ENCODE measurements at regions of chr7 and their contacts with region 1.

Region 1: DNA sequence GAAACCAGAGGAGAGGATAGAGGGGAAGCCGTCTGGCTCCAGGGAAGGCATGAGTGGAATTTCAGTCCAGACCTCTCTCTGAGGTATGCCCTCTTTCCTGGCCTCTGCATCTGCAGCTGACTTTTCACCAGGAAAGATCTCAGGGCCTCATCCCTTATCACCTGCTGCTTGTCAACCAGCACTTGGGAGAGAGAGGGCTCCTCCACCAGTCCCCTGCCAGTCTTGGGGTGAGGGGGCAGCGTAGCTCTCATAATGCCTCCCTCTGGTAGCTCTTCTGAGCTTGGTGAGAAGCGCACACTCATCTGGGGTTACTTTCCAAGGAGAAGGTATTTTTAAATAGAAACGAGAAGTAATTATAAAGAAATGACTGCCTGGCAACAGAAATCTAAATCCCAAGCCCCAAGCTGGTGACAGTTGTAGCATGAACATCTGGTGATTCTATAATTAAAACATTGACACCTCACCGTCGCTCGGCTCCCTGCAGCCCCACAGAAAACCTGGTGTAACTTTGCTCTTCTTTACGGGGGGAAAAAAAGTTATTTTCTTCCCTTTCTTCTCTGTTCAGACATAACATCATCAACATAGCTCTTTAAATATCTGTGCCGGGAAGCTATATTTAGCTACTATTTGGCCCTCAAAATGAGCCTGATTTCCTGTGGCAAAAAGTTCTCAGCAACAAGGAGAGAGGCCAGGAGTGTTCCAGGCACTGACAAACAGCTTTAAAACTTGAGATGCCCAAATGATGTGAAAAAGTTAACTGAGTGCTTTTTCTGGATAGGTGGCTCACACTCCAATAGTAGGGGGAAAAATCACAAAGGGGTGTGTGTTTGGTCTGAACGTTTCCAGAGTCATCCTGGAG is 26.9 kb downstream of the HIP1 start:
- DNase-seq: peak; percentile 86
- H3K4me3 ChIP-seq: peak overlapping the region; percentile 53
- H3K27ac ChIP-seq: peak overlapping the region; percentile 98
- H3K4me1 ChIP-seq: peaks cover 41% of the 10 kb centered on the region
- CTCF ChIP-seq: no peak

Region 2: GRCh38 chr7:75662579-75663301 is 49.1 kb before region 1 on chr7:
- CTCF ChIA-PET with region 1: no interaction called
- POLR2A ChIA-PET with region 1: no interaction called
- intact Hi-C with region 1: loop called (anchors 5 kb)
- DNase-seq: peak; percentile 91
- H3K4me3 ChIP-seq: peak overlapping the region; percentile 58
- H3K27ac ChIP-seq: peak overlapping the region; percentile 95
- H3K4me1 ChIP-seq: peaks cover 44% of the 10 kb centered on the region
- CTCF ChIP-seq: no peak

Region 3: GRCh38 chr7:75722373-75722772 is 10.5 kb after region 1 on chr7:
- CTCF ChIA-PET with region 1: no interaction called
- POLR2A ChIA-PET with region 1: interaction called, 14 read pairs
- intact Hi-C with region 1: no loop called
- DNase-seq: no peak
- H3K4me3 ChIP-seq: no peak overlapping the region
- H3K27ac ChIP-seq: no peak overlapping the region
- H3K4me1 ChIP-seq: peaks cover 60% of the 10 kb centered on the region
- CTCF ChIP-seq: no peak

Region 4: DNA sequence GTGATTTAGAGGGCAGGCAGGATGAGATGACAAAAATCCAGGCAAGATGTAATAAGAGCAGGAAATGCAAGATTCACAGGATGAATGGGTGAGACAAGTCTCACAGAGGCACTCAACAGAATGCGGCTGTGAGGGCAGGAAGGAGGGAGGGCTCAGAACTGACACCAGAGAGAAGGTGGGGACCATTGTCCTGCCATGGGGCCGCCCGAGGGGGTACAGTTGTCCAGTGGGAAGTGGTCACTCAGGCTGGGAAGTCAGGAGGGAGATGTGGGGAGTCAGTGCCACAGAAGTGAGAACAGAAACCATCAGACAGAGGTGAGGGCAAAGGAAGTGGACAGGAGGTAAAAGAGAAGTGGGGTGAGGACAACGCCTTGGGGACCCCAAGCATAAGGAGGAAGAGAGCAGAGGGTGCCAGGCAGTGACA is 18.0 kb after region 1 on chr7:
- CTCF ChIA-PET with region 1: no interaction called
- POLR2A ChIA-PET with region 1: interaction called, 12 read pairs
- intact Hi-C with region 1: no loop called
- DNase-seq: no peak
- H3K4me3 ChIP-seq: no peak overlapping the region
- H3K27ac ChIP-seq: peak overlapping the region; percentile 54
- H3K4me1 ChIP-seq: peaks cover 88% of the 10 kb centered on the region
- CTCF ChIP-seq: no peak

Region 5: DNA sequence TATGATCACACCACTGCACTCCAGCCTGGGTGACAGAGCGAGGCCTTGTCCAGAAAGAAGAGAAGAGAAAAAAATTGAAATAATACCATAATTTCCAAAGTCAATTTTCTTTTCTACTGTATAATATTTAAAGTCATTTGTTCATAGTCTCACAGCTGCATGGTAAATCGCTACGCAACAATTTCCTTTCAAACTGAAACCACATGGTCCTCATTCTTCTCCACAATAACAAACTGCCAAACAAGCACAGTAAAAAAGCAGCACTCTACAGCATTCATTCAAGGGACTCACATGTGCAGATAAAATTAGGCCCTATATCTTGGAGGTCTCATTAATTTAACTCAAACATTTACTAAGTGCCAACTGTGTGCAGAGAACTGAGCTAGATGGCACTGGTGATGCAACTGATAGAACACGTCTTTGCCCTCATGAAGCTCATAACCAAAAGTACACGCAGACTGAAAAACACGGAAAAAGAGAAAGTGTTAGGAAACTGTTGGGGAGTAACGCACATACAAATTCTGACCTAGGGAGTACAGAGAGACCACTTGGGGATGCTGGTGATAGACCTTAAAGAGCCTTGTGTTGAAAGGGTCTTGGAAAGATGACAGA is 421.4 kb after region 1 on chr7:
- CTCF ChIA-PET with region 1: no interaction called
- POLR2A ChIA-PET with region 1: no interaction called
- intact Hi-C with region 1: no loop called
- DNase-seq: no peak
- H3K4me3 ChIP-seq: no peak overlapping the region
- H3K27ac ChIP-seq: no peak overlapping the region
- H3K4me1 ChIP-seq: no peaks in the 10 kb centered on the region
- CTCF ChIP-seq: no peak